ENCODE measurements at regions of chr3 and their contacts with region 1.

Region 1: DNA sequence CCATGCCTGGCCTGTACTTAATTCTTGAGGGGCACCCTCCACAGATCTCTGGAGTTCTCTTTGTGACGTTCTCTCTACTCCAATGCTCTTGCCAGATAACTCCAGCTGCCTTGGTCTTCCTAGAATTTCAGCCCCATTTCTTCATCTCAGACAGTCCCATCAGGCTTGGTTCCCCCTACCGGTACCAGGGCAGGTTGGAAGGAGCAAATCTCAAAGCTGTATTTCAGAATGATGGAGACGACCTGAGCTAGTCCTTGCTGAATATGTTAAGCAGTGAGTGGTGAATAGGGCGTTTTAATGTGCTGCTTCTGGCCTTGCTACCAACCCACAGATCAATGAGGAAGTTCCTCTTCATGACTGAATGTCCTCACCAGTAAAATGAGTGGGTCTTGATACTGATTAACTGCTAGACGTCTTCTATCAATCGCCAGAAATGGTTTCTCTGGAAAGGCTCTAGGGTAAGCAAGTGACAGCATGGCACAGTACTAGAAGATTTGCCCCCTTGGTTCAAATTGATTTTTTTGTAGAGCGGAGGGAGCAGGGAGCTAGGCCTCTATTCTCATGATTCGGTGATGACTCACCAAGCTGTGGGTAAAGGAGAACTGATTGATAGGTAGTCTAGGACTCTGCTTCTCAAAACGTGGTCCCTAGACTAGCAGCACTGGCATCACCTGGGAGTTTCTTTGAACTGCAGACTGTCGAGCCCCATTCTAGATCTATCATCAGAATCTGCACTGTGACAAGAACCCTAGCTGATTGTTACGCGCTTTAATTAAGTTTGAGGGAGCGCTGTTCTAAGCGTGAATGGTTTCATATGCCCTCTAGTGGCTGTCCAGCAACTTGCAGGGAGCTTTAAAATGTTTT is 67.8 kb downstream of the UBP1 start:
- DNase-seq: peak; percentile 71
- H3K4me3 ChIP-seq: no peak overlapping the region
- H3K27ac ChIP-seq: no peak overlapping the region
- H3K4me1 ChIP-seq: peaks cover 6% of the 10 kb centered on the region
- H3K27me3 ChIP-seq: no peaks in the 10 kb centered on the region
- CTCF ChIP-seq: peak; percentile 81 to 82
- POLR2A ChIP-seq: no peak

Region 2: DNA sequence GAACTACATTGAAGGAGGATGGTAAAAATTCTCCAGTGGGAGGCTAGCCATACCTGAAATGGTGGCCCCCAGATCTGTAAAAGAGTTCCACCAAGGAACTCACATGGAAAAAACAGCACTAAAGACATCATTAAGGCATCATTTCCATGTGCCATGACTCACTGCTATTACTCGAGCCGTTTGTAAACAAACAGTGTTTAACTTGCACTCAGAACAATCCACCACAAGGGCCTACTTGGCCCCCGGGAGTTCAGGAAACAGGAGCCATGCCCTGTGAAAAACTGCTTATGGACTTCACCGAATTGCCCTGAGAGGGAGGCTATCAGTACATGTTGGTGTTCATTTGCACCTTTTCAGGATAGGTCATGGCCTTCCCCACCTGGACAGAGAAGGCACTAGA is 402.8 kb before region 1 on chr3:
- CTCF ChIA-PET with region 1: no interaction called
- POLR2A ChIA-PET with region 1: no interaction called
- dilution Hi-C with region 1: no loop called
- intact Hi-C with region 1: no loop called
- DNase-seq: peak; percentile 43
- H3K4me3 ChIP-seq: no peak overlapping the region
- H3K27ac ChIP-seq: no peak overlapping the region
- H3K4me1 ChIP-seq: no peaks in the 10 kb centered on the region
- H3K27me3 ChIP-seq: peaks cover 0 to 5% of the 10 kb centered on the region in 2 experiments
- CTCF ChIP-seq: no peak
- POLR2A ChIP-seq: no peak

Region 3: GRCh38 chr3:33124638-33125037 is 247.8 kb before region 1 on chr3:
- CTCF ChIA-PET with region 1: interaction called, 639 read pairs
- POLR2A ChIA-PET with region 1: no interaction called
- dilution Hi-C with region 1: no loop called
- intact Hi-C with region 1: no loop called
- DNase-seq: no peak
- H3K4me3 ChIP-seq: no peak overlapping the region
- H3K27ac ChIP-seq: no peak overlapping the region
- H3K4me1 ChIP-seq: no peaks in the 10 kb centered on the region
- H3K27me3 ChIP-seq: no peaks in the 10 kb centered on the region
- CTCF ChIP-seq: no peak
- POLR2A ChIP-seq: no peak

Region 4: GRCh38 chr3:33167716-33168336 is 204.6 kb before region 1 on chr3:
- CTCF ChIA-PET with region 1: interaction called, 14 read pairs
- POLR2A ChIA-PET with region 1: no interaction called
- dilution Hi-C with region 1: no loop called
- intact Hi-C with region 1: no loop called
- DNase-seq: peak; percentile 38
- H3K4me3 ChIP-seq: no peak overlapping the region
- H3K27ac ChIP-seq: no peak overlapping the region
- H3K4me1 ChIP-seq: no peaks in the 10 kb centered on the region
- H3K27me3 ChIP-seq: no peaks in the 10 kb centered on the region
- CTCF ChIP-seq: no peak
- POLR2A ChIP-seq: no peak

Region 5: GRCh38 chr3:33218446-33219174 is 153.8 kb before region 1 on chr3 and contains the start of gene SUSD5:
- CTCF ChIA-PET with region 1: interaction called, 33 read pairs
- POLR2A ChIA-PET with region 1: no interaction called
- dilution Hi-C with region 1: no loop called
- intact Hi-C with region 1: loop called (anchors 2 kb)
- DNase-seq: peak; percentile 56
- H3K4me3 ChIP-seq: peak within 1 kb of the TSS; percentile 39 to 71 (median 54)
- H3K27ac ChIP-seq: peak within 1 kb of the TSS; percentile 28
- H3K4me1 ChIP-seq: peaks cover 13% of the 10 kb centered on the region
- H3K27me3 ChIP-seq: peaks cover 0 to 10% of the 10 kb centered on the region in 2 experiments
- CTCF ChIP-seq: no peak
- POLR2A ChIP-seq: peak; percentile 17
- total RNA-seq, gene SUSD5: 15.3 and 18.8 TPM in 2 replicates

Region 6: DNA sequence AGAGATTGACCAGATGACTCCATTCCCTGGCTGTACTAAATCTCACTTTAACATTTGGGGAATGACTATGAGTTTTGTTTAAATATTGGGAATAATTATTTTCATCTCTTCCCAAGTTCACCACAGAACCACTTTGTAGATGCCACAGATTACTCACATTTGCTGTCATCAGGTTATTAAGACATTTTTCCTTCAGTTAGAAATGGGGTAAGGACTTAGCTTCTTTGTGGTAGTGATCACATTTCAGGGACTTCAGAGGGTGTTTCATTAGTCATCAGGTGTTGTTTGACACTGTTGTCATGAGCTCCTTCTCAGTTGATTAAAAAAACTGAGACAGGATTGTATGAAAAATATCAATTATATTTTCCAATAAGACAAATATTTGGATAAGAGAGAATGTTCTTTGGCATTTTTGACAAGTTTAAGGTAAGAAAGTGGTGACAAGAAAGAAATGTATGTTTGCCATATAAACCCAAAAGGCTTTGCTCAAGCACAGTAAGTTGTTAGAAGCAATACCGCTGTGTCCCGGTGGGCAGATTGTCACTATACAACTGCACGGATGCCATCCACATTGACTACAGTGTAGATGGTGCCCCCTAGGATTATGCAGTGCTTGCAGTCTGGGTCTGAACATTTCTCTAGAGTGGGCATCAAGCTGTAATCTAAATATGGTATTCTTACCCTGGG is 72.9 kb before region 1 on chr3:
- CTCF ChIA-PET with region 1: interaction called, 17 read pairs
- POLR2A ChIA-PET with region 1: no interaction called
- dilution Hi-C with region 1: no loop called
- intact Hi-C with region 1: no loop called
- DNase-seq: no peak
- H3K4me3 ChIP-seq: no peak overlapping the region
- H3K27ac ChIP-seq: no peak overlapping the region
- H3K4me1 ChIP-seq: peaks cover 5% of the 10 kb centered on the region
- H3K27me3 ChIP-seq: no peaks in the 10 kb centered on the region
- CTCF ChIP-seq: no peak
- POLR2A ChIP-seq: no peak

Region 7: DNA sequence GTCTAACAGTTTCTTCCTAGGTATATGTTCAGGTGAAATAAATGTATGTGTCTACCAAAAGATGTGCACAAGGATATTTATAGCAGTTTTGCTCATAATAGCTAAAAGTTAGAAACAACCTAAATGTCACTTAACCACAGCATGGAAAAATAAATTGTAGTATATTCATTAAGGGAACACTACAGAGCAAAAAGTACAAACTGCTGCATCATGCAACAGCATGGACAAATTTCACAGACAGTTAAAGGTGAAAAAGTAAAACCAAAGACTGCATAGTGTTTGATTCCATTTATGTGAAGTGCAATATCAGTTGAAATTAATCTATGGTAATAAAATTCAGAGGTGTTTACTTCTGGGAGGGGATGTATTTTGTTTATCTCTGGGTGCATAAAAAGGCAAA is 32.7 kb before region 1 on chr3:
- CTCF ChIA-PET with region 1: interaction called, 10 read pairs
- POLR2A ChIA-PET with region 1: no interaction called
- dilution Hi-C with region 1: no loop called
- intact Hi-C with region 1: no loop called
- DNase-seq: no peak
- H3K4me3 ChIP-seq: no peak overlapping the region
- H3K27ac ChIP-seq: no peak overlapping the region
- H3K4me1 ChIP-seq: no peaks in the 10 kb centered on the region
- H3K27me3 ChIP-seq: no peaks in the 10 kb centered on the region
- CTCF ChIP-seq: no peak
- POLR2A ChIP-seq: no peak

Region 8: DNA sequence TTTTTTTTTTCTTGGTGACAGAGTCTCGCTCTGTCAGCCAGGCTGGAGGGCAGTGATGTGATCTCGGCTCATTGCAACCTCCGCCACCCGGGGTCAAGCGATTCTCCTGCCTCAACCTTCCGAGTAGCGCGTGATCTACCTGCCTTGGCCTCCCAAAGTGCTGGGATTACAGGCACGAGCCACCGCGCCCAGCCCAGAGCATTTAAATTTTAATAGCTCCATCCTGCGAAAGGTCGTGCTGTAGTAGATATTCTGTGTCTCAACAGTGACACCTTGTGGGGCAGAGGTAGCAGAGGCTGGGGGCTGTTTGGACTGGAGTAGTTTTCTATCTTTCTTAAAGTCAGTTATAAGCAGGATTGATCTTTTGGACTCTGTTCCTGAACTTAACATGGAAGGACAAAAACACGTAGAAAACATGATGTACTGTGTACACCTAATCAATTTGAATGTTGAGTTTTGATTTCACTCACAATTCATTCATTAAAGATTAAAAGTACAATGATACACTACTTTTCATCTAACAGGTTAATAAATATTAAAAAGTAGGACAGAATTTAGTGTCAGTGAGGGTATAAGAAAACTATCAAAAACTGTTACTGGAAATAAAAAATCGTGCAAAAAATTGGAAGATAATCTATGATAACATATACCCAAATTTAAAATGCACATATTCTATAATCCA is 415.0 kb after region 1 on chr3:
- CTCF ChIA-PET with region 1: interaction called, 27 read pairs
- POLR2A ChIA-PET with region 1: no interaction called
- dilution Hi-C with region 1: no loop called
- intact Hi-C with region 1: loop called (anchors 5 kb)
- DNase-seq: peak; percentile 71
- H3K4me3 ChIP-seq: peak overlapping the region; percentile 7 to 17 (median 8)
- H3K27ac ChIP-seq: no peak overlapping the region
- H3K4me1 ChIP-seq: peaks cover 4% of the 10 kb centered on the region
- H3K27me3 ChIP-seq: no peaks in the 10 kb centered on the region
- CTCF ChIP-seq: peak; percentile 73 to 74
- POLR2A ChIP-seq: no peak

Measured in endothelial cell of umbilical vein (primary cell).